Esophagus muscularis mucosa (tissue), 4 donors: ENCODE measurements at regions of chr15 and their contacts with region 1.

Region 1: GRCh38 chr15:96316953-96317629 is 13.4 kb upstream of the NR2F2 start:
- DNase-seq: no peak
- H3K4me3 ChIP-seq: peak overlapping the region; percentile 1 to 27 (median 25)
- H3K27ac ChIP-seq: peak overlapping the region; percentile 94 to 95 (median 94)
- H3K4me1 ChIP-seq: peaks cover 8 to 68% (median 53%) of the 10 kb centered on the region in 4 donors
- H3K27me3 ChIP-seq: no peaks in the 10 kb centered on the region
- CTCF ChIP-seq: no peak
- EP300 ChIP-seq: no peak
- POLR2A ChIP-seq: no peak

Region 2: GRCh38 chr15:96181873-96182301 is 135.2 kb before region 1 on chr15:
- intact Hi-C with region 1: loop called (anchors 10 kb)
- DNase-seq: no peak
- H3K4me3 ChIP-seq: peak overlapping the region in 2 of 4 donors; percentile 11 to 33
- H3K27ac ChIP-seq: peak overlapping the region; percentile 66 to 77 (median 76)
- H3K4me1 ChIP-seq: peaks cover 0 to 31% (median 27%) of the 10 kb centered on the region in 4 donors
- H3K27me3 ChIP-seq: no peaks in the 10 kb centered on the region
- CTCF ChIP-seq: no peak
- EP300 ChIP-seq: no peak
- POLR2A ChIP-seq: no peak

Region 3: DNA sequence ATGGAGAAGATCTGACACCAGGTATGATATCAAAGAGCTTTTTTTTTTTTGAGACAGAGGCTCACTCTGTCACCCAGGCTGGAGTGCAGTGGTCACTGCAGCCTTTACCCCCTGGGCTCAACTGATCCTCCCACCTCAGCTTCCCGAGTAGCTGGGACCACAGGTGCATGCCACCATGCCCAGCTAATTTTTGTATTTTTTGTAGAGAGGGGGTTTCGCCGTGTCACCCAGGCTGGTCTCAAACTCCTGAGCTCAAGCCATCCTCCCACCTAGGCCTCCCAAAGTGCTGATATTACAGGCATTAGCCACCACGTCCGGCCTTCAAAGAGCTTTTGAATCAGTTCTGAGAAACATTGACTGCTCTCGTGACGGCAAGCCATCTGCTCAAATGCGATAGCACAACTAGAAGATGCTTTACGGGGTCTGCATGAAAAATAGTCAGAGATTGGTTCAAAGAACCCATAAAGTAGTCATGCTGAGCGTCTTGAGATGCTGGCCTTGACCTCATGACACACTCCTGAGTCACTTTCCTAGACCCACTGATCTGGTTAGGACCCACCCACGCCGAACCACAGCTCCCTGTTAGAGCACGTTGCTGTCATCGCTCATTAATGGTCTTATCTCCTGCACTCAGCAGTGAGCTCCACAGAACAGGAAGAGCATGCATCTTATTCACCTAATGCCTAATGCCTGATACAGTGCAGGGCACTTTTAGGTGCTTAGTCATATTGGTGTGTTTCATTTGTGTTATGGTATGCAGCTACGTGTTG is 43.6 kb before region 1 on chr15:
- intact Hi-C with region 1: loop called (anchors 5 kb)
- DNase-seq: peak; percentile 79
- H3K4me3 ChIP-seq: no peak overlapping the region
- H3K27ac ChIP-seq: no peak overlapping the region
- H3K4me1 ChIP-seq: peaks cover 0 to 9% (median 0%) of the 10 kb centered on the region in 4 donors
- H3K27me3 ChIP-seq: no peaks in the 10 kb centered on the region
- CTCF ChIP-seq: no peak
- EP300 ChIP-seq: no peak
- POLR2A ChIP-seq: no peak